Mammary epithelial cell (primary cell): ENCODE measurements at regions of chr3 and their contacts with region 1.

Region 1: DNA sequence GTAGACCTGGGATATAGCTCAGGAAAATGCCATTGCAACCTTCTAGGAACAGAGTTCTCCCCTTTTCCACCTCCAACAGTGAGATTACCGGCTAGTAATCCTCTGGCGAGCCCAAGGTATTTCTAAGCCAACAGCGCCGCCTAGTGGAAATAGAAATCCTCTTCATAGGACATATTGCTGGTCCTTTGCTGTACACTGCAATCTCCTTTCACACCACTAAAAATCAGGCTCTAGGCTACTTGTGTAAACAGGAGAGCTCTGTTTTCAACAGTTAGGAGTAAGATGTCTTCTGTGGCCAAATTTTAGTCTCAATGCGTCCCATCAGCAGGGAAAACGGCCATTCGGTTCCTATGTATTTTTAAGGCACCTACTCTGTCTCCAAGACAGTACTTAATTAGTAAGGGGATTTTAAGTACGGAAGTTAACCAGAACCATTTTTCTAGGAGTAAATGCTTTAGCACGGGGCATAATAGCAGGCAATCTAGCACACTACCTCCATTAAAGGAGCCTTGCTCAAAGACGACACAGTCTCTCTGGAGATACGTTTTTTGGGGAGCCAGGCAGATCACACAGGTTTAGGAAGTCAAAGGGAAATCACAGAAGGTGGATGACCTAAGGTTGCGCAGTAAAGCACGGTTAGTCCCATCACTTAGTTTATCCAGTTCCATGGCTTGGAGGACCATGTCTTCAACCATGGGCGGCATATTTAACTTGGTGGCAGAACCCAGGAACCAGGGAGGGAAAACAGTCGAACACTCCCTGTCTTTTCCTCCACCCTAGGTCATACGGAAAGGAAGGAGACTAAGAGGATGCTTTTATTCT is 43.8 kb downstream of the NCEH1 start:
- DNase-seq: peak; percentile 70
- H3K4me3 ChIP-seq: no peak overlapping the region
- H3K27ac ChIP-seq: no peak overlapping the region
- H3K4me1 ChIP-seq: peaks cover 15% of the 10 kb centered on the region
- H3K27me3 ChIP-seq: no peaks in the 10 kb centered on the region
- CTCF ChIP-seq: peak; percentile 88 to 94

Region 2: DNA sequence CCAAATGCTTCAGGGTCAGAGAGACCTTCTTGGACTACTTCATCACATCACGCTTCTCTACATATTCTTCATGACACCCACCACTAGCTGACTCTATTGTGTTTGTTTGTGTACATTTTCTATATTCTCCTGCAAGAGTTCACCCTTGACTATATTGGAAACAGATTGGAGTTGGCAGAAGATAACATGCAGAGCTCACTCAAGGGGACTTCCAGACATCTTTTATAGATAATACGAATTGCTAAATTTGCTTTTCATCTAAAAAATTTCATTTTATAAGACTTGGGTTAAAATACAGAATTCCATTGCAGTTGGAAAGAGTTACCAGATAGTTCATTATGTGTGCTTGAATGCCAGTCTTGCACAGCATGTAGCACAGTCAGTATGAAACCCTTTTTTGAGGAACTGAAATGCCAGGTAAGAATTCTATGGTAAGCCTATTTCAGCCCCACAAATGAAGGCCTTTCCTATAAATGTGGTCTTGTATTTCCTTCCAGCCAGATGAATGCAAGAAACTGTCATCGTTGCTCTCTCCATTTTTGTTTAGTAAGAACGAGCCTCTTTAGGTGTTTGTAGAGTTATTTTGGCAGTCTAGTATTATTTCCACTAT is 396.4 kb before region 1 on chr3:
- CTCF ChIA-PET with region 1: no interaction called
- dilution Hi-C with region 1: no loop called
- in situ Hi-C with region 1: no loop called
- intact Hi-C with region 1: no loop called
- DNase-seq: no peak
- H3K4me3 ChIP-seq: no peak overlapping the region
- H3K27ac ChIP-seq: no peak overlapping the region
- H3K4me1 ChIP-seq: no peaks in the 10 kb centered on the region
- H3K27me3 ChIP-seq: no peaks in the 10 kb centered on the region
- CTCF ChIP-seq: no peak

Region 3: GRCh38 chr3:172332256-172333041 is 334.6 kb before region 1 on chr3:
- CTCF ChIA-PET with region 1: no interaction called
- dilution Hi-C with region 1: no loop called
- in situ Hi-C with region 1: no loop called
- intact Hi-C with region 1: loop called (anchors 2 kb)
- DNase-seq: peak; percentile 50
- H3K4me3 ChIP-seq: no peak overlapping the region
- H3K27ac ChIP-seq: no peak overlapping the region
- H3K4me1 ChIP-seq: peaks cover 8% of the 10 kb centered on the region
- H3K27me3 ChIP-seq: no peaks in the 10 kb centered on the region
- CTCF ChIP-seq: peak; percentile 89 to 97

Region 4: DNA sequence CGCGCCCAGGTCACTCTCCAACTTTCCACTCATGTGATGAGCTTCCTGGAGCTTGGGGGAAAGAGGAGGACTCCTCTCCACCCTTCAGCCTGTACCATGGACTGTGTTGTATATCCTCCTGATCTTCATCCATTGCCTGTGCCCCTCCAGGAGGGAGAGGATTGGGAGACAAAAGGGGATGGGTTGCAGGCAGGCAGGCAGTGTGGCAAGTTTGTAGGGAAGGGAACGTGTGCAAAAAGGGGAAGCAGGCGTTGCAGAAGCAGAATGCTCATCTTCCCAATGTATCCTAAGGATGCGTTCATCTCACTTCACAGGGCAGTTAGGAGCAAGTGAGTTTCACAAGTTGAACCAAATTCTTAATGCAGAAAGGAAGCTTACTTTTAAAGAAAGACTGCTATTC is 190.7 kb before region 1 on chr3:
- CTCF ChIA-PET with region 1: interaction called, 8 read pairs
- dilution Hi-C with region 1: no loop called
- in situ Hi-C with region 1: loop called (anchors 10 kb)
- intact Hi-C with region 1: no loop called
- DNase-seq: no peak
- H3K4me3 ChIP-seq: peak overlapping the region in 2 of 3 experiments; percentile 46 to 52
- H3K27ac ChIP-seq: peak overlapping the region; percentile 68
- H3K4me1 ChIP-seq: peaks cover 7% of the 10 kb centered on the region
- H3K27me3 ChIP-seq: no peaks in the 10 kb centered on the region
- CTCF ChIP-seq: no peak

Region 5: GRCh38 chr3:172622916-172623700 is 44.0 kb before region 1 on chr3:
- CTCF ChIA-PET with region 1: interaction called, 3 read pairs
- dilution Hi-C with region 1: no loop called
- in situ Hi-C with region 1: no loop called
- intact Hi-C with region 1: loop called (anchors 1 kb)
- DNase-seq: peak; percentile 66
- H3K4me3 ChIP-seq: peak overlapping the region in 1 of 3 experiments; percentile 8
- H3K27ac ChIP-seq: peak overlapping the region; percentile 22
- H3K4me1 ChIP-seq: peaks cover 20% of the 10 kb centered on the region
- H3K27me3 ChIP-seq: no peaks in the 10 kb centered on the region
- CTCF ChIP-seq: peak; percentile 66 to 71